PC-9 (cell line): ENCODE measurements at regions of chr4 and their contacts with region 1.

Region 1: GRCh38 chr4:189341881-189342280 is 598.8 kb upstream of the FRG1 start:
- DNase-seq: no peak
- H3K4me3 ChIP-seq: no peak overlapping the region
- H3K27ac ChIP-seq: no peak overlapping the region
- H3K4me1 ChIP-seq: no peaks in the 10 kb centered on the region
- H3K27me3 ChIP-seq: no peaks in the 10 kb centered on the region
- CTCF ChIP-seq: no peak

Region 2: DNA sequence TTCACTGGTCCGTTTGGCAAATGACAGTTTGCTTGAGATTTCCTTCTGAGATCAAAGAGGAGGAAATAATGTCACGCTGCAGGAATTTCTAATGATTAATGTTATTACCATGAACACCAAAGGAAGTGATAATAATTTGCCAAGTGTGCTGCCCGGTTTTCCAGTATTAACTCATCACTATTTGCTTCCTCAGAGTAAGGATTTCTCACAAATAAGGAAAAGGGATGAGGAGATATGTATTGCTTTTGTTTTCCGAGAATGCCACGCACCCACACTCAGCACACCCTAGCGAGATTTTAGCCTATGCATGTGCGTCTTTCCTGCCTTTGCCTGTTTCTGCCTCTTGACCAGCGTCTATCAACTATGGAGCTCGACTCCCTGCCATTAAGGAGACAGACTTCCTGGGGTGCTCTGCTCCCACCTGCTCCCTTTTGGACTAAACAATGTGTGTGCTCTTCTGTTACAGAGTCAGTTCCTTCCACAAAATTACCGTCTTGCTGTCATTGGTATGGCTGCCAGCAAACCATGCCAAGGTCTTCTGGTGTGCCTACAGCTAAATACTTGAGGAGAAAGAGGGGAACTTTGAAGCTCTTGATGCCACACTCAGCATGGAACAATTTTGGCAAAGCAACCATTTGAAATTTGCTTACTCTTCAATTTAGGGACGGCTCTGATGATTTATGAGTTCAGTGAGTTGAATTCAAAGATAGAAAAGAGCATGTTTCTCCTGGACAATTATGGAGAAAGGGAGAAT is 1739.4 kb before region 1 on chr4:
- CTCF ChIA-PET with region 1: no interaction called
- POLR2A ChIA-PET with region 1: no interaction called
- intact Hi-C with region 1: loop called (anchors 10 kb)
- DNase-seq: no peak
- H3K4me3 ChIP-seq: no peak overlapping the region
- H3K27ac ChIP-seq: no peak overlapping the region
- H3K4me1 ChIP-seq: no peaks in the 10 kb centered on the region
- H3K27me3 ChIP-seq: no peaks in the 10 kb centered on the region
- CTCF ChIP-seq: no peak

Region 3: GRCh38 chr4:188918787-188919186 is 423.1 kb before region 1 on chr4:
- CTCF ChIA-PET with region 1: no interaction called
- POLR2A ChIA-PET with region 1: no interaction called
- intact Hi-C with region 1: no loop called
- DNase-seq: no peak
- H3K4me3 ChIP-seq: no peak overlapping the region
- H3K27ac ChIP-seq: no peak overlapping the region
- H3K4me1 ChIP-seq: no peaks in the 10 kb centered on the region
- H3K27me3 ChIP-seq: no peaks in the 10 kb centered on the region
- CTCF ChIP-seq: no peak

Region 4: DNA sequence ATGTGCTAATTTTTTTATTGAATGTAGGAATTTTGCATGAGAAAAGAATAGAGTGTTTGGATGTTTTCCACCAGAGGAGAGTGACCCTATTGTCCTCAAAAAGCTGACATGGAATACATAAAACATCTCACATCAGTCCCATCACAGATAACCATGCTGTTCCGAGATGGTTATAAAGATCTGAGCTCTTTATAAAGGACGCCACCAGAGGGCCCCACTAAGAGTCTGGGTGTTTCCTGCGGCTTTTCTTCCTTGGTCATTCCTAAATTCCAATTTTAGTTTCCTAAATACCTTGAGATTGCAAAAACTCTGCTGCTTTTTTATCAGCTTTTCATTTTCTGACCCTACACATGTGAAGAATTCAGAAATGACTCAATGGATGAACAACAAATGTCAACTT is 94.3 kb after region 1 on chr4:
- CTCF ChIA-PET with region 1: no interaction called
- POLR2A ChIA-PET with region 1: no interaction called
- intact Hi-C with region 1: no loop called
- DNase-seq: no peak
- H3K4me3 ChIP-seq: no peak overlapping the region
- H3K27ac ChIP-seq: no peak overlapping the region
- H3K4me1 ChIP-seq: no peaks in the 10 kb centered on the region
- H3K27me3 ChIP-seq: no peaks in the 10 kb centered on the region
- CTCF ChIP-seq: peak; percentile 50